HEK293 (cell line): ENCODE measurements at regions of chr5 and their contacts with region 1.

Region 1: DNA sequence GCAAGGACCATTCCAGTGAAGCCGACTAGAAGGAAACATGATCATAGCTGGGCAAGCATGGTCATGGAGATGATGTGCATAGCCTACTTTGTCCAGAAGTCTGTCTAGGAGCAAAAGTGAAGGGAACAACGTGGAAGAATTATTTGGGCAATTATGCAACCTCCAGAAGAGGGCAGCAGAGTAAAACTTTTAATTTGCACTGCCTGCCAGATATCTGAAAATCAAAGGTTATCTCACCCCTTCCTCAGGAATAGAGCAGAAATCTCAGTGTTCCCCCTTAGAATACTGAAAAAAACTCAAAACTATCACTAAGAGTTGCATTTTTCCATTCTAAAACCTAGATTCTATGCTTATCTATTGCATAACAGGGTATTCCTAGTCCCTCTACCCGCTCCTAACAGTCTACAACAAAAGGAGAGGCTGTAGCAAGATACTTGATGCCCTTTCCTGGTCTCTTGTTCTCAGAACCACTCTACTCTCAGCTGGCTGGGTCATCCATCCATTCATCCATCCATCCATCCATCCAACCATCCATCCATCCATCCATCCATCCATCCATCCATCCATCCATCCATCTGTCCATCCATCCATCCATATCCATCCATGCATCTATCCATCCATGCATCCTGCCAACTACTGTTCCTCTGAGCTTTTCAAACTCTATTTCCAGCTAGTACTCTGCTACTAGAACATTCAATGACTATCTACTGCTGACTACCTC is 8.4 kb upstream of the SETD9 start:
- H3K4me3 ChIP-seq: no peak overlapping the region
- H3K27ac ChIP-seq: no peak overlapping the region
- H3K4me1 ChIP-seq: no peaks in the 10 kb centered on the region
- CTCF ChIP-seq: 0 out of 2 replicates have a peak, but pooled peaks have one; percentile 50

Region 2: GRCh38 chr5:56264417-56265025 is 636.5 kb before region 1 on chr5:
- CTCF ChIA-PET with region 1: interaction called, 11 read pairs
- POLR2A ChIA-PET with region 1: no interaction called
- H3K4me3 ChIP-seq: no peak overlapping the region
- H3K27ac ChIP-seq: no peak overlapping the region
- H3K4me1 ChIP-seq: no peaks in the 10 kb centered on the region
- CTCF ChIP-seq: peak; percentile 69

Region 3: DNA sequence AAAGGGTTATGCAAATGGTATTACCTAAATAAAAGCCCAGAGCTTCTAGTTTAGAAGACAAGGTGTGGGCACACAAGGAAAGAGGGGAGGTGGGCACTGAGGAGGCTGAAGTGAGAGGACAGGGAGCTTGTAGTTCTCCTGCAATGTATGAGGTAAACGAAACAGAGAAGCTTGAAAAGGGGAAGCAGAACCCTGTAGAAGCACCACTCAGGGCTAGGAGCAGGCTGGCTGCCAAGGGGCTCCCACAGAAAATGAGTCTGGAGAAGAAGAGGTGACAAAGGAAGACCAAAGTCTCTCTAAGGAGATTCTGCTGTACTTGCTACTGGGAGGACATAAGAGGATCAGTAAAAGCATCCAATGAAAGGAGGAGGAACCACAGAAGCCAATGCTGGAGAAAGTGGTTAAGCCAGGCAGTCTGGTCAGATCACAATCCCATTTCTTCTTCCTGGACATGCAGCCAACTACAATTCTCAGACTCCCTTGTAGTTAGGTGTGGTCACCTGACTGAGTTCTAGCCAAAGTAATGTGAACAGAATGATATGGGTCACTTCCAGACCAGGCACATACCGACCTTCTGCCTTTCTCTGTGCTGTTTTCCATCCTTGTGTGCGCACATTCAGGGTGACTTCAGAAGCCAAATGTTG is 260.1 kb before region 1 on chr5:
- CTCF ChIA-PET with region 1: no interaction called
- POLR2A ChIA-PET with region 1: no interaction called
- H3K4me3 ChIP-seq: no peak overlapping the region
- H3K27ac ChIP-seq: no peak overlapping the region
- H3K4me1 ChIP-seq: peaks cover 24% of the 10 kb centered on the region
- CTCF ChIP-seq: no peak

Region 4: GRCh38 chr5:57137401-57137800 is 236.4 kb after region 1 on chr5:
- CTCF ChIA-PET with region 1: interaction called, 44 read pairs
- POLR2A ChIA-PET with region 1: no interaction called
- H3K4me3 ChIP-seq: no peak overlapping the region
- H3K27ac ChIP-seq: no peak overlapping the region
- H3K4me1 ChIP-seq: no peaks in the 10 kb centered on the region
- CTCF ChIP-seq: no peak

Region 5: GRCh38 chr5:57219386-57219785 is 318.4 kb after region 1 on chr5:
- CTCF ChIA-PET with region 1: interaction called, 16 read pairs
- POLR2A ChIA-PET with region 1: no interaction called
- H3K4me3 ChIP-seq: no peak overlapping the region
- H3K27ac ChIP-seq: no peak overlapping the region
- H3K4me1 ChIP-seq: no peaks in the 10 kb centered on the region
- CTCF ChIP-seq: no peak

Region 6: GRCh38 chr5:57277085-57277484 is 376.1 kb after region 1 on chr5:
- CTCF ChIA-PET with region 1: interaction called, 20 read pairs
- POLR2A ChIA-PET with region 1: no interaction called
- H3K4me3 ChIP-seq: no peak overlapping the region
- H3K27ac ChIP-seq: no peak overlapping the region
- H3K4me1 ChIP-seq: no peaks in the 10 kb centered on the region
- CTCF ChIP-seq: no peak; the same call in 1 of the 2 replicates

Region 7: DNA sequence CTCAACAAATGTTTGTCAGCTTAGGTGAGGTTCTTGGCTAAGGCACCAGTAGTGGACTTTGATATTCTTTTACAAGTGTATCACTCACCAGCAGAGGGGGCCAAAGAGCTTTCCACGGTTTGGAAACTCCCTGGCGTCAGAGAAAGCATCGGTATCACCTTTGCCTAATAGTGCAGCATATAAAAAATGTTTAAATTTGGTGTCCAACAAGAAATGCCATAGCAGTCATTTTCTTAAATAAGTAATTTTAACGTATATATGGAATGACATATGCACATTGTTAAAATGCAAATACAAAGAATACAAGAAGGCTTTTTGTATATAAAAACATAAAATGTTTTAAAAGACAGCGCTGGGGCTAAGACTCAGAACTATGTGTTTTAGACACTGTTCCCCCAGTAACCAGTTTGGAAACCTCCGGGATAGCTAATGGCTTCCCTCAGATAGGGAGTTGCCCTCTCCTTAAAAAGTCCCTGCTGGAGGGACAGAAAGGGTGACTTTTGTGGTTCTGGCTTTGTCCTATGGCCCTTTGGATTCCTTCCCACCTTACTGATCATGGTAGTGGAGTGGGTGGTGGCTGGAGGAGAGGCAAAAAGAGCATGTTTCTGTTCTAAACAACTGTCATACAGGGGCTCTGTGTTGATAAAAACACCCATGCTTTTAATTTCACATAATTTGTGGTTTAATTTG is 397.4 kb after region 1 on chr5:
- CTCF ChIA-PET with region 1: interaction called, 11 read pairs
- POLR2A ChIA-PET with region 1: no interaction called
- H3K4me3 ChIP-seq: no peak overlapping the region
- H3K27ac ChIP-seq: no peak overlapping the region
- H3K4me1 ChIP-seq: no peaks in the 10 kb centered on the region; the same call in none of the 2 replicates
- CTCF ChIP-seq: peak; percentile 54; the same call in 1 of the 2 replicates